ENCODE measurements at regions of chr7 and their contacts with region 1.

Region 1: DNA sequence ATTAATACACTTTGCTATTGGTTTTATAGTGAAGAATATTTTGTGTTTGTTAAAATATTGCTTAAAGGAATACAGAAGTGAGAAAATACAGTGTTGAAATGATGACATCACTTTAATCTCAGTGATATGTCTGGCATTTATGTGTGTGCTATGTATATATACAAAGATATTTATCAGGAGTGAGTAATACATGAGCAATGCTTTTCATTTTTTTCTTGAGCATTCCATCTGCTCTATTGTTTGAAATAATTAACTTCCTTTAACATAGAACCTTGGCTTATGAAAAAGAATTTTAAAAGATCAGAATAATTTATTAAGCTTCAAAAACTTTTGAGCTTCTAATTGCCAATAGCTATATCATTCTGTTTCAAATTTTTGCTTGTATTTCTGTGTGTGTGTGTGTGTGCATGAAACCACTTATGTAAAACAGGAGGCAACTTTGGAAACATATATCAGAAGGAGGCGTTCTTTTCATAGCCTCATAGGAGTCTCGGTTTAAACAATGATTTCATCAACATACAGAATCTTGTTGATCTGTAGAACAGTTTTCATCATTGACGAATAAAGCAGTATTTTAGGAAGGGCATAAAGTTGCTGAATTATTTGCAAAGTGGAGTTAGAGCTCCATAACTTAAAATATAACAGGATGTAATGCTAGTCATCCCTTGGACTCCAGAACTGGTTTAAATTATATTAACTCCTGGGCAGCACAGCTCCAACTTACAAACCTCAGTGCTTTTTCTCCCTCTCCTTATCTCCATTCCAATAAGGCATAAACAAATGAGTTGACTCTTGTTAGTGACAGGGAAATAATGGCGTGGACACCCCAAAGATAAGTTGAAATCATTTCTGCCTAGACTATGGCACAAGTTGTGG is 228.4 kb upstream of the DGKB start:
- DNase-seq: no peak
- ATAC-seq: no peak
- H3K4me3 ChIP-seq: no peak overlapping the region
- H3K27ac ChIP-seq: no peak overlapping the region
- H3K4me1 ChIP-seq: no peaks in the 10 kb centered on the region
- H3K27me3 ChIP-seq: no peaks in the 10 kb centered on the region
- CTCF ChIP-seq: no peak

Region 2: DNA sequence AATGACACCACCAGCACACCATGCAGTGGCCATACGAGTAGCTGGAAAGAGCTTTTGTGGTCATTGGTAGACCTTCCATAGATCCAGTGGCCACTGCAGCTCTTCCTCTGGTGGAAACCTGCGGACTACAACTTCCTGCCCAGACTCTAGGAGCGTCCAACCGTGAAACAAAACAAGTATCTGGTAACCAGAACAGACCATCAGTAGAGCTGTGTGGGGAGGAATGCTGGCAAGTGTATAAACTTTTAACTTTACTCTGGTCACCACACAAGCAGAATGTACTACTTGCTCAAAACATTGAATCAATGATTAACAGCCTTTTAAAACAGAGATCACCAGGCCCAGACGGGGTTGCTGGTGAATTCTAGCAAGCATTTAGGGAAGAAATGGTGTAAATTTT is 73.6 kb before region 1 on chr7:
- intact Hi-C with region 1: no loop called
- DNase-seq: no peak
- ATAC-seq: no peak
- H3K4me3 ChIP-seq: no peak overlapping the region
- H3K27ac ChIP-seq: no peak overlapping the region
- H3K4me1 ChIP-seq: no peaks in the 10 kb centered on the region
- H3K27me3 ChIP-seq: peaks cover 0 to 7% (median 0%) of the 10 kb centered on the region in 7 donors
- CTCF ChIP-seq: no peak

Region 3: DNA sequence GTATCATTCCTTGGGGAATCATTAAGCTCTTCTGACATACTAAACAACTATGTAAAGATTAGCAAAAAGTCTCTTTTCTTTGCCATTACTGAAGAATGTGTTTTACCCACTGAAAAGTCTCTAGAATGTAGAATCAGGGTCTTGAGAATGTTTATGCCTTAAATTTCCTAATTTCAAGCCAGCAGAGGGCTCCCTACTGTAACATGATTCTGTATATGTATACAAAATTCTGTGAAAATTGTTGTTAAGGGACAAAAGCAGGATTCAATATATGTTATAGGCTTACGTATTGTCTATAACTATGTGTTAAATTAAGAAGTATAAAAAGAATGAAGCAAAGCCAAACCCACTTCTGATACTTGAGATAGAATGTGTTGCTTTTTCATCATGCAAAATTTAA is 68.6 kb after region 1 on chr7:
- intact Hi-C with region 1: loop called in 1 of 10 experiments (anchors 10 kb)
- DNase-seq: no peak
- ATAC-seq: no peak
- H3K4me3 ChIP-seq: no peak overlapping the region
- H3K27ac ChIP-seq: no peak overlapping the region
- H3K4me1 ChIP-seq: peaks cover 0 to 5% (median 0%) of the 10 kb centered on the region in 9 donors
- H3K27me3 ChIP-seq: no peaks in the 10 kb centered on the region
- CTCF ChIP-seq: peak in 5 of 9 donors; percentile 36 to 53 (median 37)